ENCODE measurements at regions of chr18 and their contacts with region 1.

Region 1: GRCh38 chr18:36931106-36931505 is 102.2 kb downstream of the KIAA1328 start:
- DNase-seq: no peak
- H3K4me3 ChIP-seq: no peak overlapping the region
- H3K27ac ChIP-seq: no peak overlapping the region
- H3K27me3 ChIP-seq: peaks cover 2% of the 10 kb centered on the region
- CTCF ChIP-seq: no peak

Region 2: DNA sequence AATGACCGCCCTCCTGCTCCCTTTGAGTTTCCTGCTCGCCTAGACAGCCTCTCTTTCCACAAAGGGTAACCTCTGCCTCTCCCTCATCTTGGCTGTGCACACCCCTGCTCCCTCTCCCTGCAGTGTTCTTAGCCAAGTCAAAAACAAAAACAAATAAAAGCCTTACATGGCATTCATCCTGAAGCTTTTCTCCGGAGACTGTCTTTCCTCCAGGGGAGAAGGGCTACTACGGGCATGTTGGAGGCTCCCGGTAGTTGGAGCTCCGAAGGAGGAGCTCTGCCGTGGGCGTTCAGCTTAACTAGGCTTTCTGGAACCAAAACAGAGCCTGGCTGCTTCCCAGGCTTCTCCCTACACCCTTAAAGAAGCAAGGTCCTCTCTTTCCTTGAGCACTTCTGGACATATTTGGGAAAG is 206.5 kb before region 1 on chr18:
- CTCF ChIA-PET with region 1: no interaction called
- POLR2A ChIA-PET with region 1: no interaction called
- DNase-seq: no peak
- H3K4me3 ChIP-seq: 0 out of 2 replicates have a peak overlapping the region, but pooled peaks have one; percentile 20
- H3K27ac ChIP-seq: peak overlapping the region; percentile 52
- H3K27me3 ChIP-seq: no peaks in the 10 kb centered on the region
- CTCF ChIP-seq: no peak

Region 3: DNA sequence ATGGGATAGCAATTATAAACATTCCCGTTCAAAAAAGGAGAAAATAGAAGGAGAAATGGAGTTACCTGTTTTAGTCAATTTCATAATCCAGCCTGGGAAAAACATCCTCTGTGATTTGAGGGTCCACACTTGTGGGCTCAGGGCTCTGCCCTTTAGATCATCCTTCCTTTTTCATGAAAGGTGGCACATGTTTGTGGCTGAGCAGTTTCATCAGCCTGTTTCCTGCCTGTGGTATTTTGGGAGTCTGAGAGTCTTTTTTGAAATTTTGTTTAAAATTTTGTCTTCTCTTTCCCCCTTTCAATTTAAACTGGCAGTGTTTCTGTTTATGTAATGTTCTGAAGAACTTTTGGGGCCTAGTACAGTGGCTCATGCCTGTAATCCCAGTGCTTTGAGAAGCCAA is 18.2 kb before region 1 on chr18:
- CTCF ChIA-PET with region 1: no interaction called
- POLR2A ChIA-PET with region 1: no interaction called
- DNase-seq: no peak
- H3K4me3 ChIP-seq: no peak overlapping the region
- H3K27ac ChIP-seq: no peak overlapping the region
- H3K27me3 ChIP-seq: no peaks in the 10 kb centered on the region
- CTCF ChIP-seq: no peak

Region 4: GRCh38 chr18:36942264-36942663 is 11.2 kb after region 1 on chr18:
- CTCF ChIA-PET with region 1: interaction called, 11 read pairs
- POLR2A ChIA-PET with region 1: no interaction called
- DNase-seq: peak; percentile 8
- H3K4me3 ChIP-seq: no peak overlapping the region
- H3K27ac ChIP-seq: no peak overlapping the region
- H3K27me3 ChIP-seq: no peaks in the 10 kb centered on the region
- CTCF ChIP-seq: peak; percentile 73

Region 5: GRCh38 chr18:37175727-37176620 is 244.9 kb after region 1 on chr18:
- CTCF ChIA-PET with region 1: no interaction called
- POLR2A ChIA-PET with region 1: no interaction called
- DNase-seq: no peak
- H3K4me3 ChIP-seq: no peak overlapping the region
- H3K27ac ChIP-seq: no peak overlapping the region
- H3K27me3 ChIP-seq: no peaks in the 10 kb centered on the region
- CTCF ChIP-seq: no peak

Region 6: DNA sequence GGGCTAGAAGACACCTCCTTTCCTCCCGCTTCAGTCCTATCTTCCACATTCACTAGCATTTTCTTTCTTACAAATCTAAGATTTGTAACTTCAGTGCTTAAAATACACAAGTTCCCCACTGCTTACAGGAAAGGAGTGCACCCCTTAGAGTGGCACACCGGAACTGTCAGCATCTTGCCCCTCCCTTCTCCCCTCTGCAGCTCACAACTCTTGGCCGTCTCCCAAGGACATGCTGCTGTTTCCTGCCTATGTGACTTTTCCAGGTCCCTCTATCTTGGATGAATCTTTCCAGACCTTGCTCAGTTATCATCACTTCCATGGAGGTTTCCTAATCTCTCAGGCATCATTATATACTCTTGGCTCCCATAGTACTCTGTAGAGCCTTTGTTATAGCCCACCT is 299.7 kb after region 1 on chr18:
- CTCF ChIA-PET with region 1: no interaction called
- POLR2A ChIA-PET with region 1: no interaction called
- DNase-seq: no peak
- H3K4me3 ChIP-seq: no peak overlapping the region
- H3K27ac ChIP-seq: no peak overlapping the region
- H3K27me3 ChIP-seq: no peaks in the 10 kb centered on the region
- CTCF ChIP-seq: no peak